ENCODE measurements at regions of chr20 and their contacts with region 1.

Region 1: DNA sequence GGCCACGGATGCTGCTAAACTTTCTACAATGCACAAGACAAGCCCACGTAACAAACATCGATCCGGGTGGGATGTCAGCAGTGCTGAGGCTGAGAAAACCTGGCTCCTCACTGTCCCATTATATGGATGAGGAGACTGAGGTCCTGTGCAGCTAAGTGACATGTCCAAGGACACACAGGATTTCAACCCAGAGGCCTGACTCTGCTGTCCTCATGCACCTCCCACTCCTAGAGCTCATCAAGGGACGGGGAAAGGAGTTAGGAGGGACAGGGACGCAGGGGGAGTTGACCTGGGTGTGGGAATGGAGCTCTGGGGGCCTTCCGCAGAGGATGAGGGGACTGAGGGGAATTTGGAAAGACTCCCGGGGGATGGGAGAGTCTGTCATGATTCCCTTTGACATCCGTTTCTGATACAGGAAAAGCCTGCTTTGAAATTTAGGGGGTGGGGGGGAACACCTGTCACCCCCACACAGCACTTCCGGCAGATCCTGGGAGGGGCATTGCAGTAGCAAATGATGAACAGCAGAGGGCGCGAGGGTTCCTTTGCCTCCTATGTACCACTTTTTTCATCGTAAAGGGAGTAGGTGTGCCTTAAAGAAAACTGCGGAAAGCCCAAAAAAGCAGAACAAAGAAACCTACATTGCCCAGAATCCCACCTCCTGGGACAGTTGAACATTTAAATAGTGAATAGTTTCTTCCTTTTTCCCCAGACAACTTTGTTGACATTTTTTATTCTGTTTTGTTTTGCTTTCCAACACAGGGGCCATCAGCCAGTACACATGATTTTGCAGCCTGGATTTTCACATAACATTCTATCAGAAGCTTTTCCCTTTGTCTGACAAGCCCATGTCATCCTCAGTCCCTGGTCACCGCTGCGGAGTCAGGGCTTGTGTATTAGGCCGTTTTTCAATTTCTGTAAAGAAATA is 48.6 kb downstream of the SLC2A10 start:
- DNase-seq: peak; percentile 48
- ATAC-seq: peak; percentile 84
- H3K4me3 ChIP-seq: no peak overlapping the region
- H3K27ac ChIP-seq: no peak overlapping the region
- H3K4me1 ChIP-seq: no peaks in the 10 kb centered on the region; a peak in 1 of 4 replicates
- H3K27me3 ChIP-seq: no peaks in the 10 kb centered on the region
- CTCF ChIP-seq: peak; percentile 61 to 95 (median 94); a peak in 5 of 6 replicates
- POLR2A ChIP-seq: no peak
- RAD21 ChIP-seq: peak; percentile 72

Region 2: GRCh38 chr20:46607191-46607848 is 150.7 kb before region 1 on chr20:
- CTCF ChIA-PET with region 1: no interaction called
- POLR2A ChIA-PET with region 1: no interaction called
- RAD21 ChIA-PET with region 1: no interaction called
- intact Hi-C with region 1: no loop called
- DNase-seq: no peak
- ATAC-seq: no peak
- H3K4me3 ChIP-seq: no peak overlapping the region
- H3K27ac ChIP-seq: no peak overlapping the region
- H3K4me1 ChIP-seq: no peaks in the 10 kb centered on the region
- H3K27me3 ChIP-seq: no peaks in the 10 kb centered on the region; the same call in 1 of the 2 replicates
- CTCF ChIP-seq: no peak
- POLR2A ChIP-seq: no peak
- RAD21 ChIP-seq: no peak

Region 3: GRCh38 chr20:47008842-47009508 is 251.0 kb after region 1 on chr20:
- CTCF ChIA-PET with region 1: no interaction called
- POLR2A ChIA-PET with region 1: no interaction called
- RAD21 ChIA-PET with region 1: no interaction called
- intact Hi-C with region 1: no loop called
- DNase-seq: no peak
- ATAC-seq: no peak
- H3K4me3 ChIP-seq: no peak overlapping the region
- H3K27ac ChIP-seq: no peak overlapping the region
- H3K4me1 ChIP-seq: no peaks in the 10 kb centered on the region
- H3K27me3 ChIP-seq: peaks cover 10% of the 10 kb centered on the region; the same call in 1 of the 2 replicates
- CTCF ChIP-seq: no peak
- POLR2A ChIP-seq: no peak
- RAD21 ChIP-seq: no peak

Region 4: GRCh38 chr20:47024461-47024937 is 266.5 kb after region 1 on chr20:
- CTCF ChIA-PET with region 1: no interaction called
- POLR2A ChIA-PET with region 1: no interaction called
- RAD21 ChIA-PET with region 1: no interaction called
- intact Hi-C with region 1: loop called (anchors 10 kb)
- DNase-seq: no peak
- ATAC-seq: no peak
- H3K4me3 ChIP-seq: no peak overlapping the region
- H3K27ac ChIP-seq: no peak overlapping the region
- H3K4me1 ChIP-seq: no peaks in the 10 kb centered on the region
- H3K27me3 ChIP-seq: peaks cover 34% of the 10 kb centered on the region
- CTCF ChIP-seq: no peak
- POLR2A ChIP-seq: no peak
- RAD21 ChIP-seq: no peak

Region 5: GRCh38 chr20:47150403-47151152 is 392.6 kb after region 1 on chr20:
- CTCF ChIA-PET with region 1: interaction called, 6 read pairs
- POLR2A ChIA-PET with region 1: no interaction called
- RAD21 ChIA-PET with region 1: interaction called in 1 of 2 experiments, 3 read pairs
- intact Hi-C with region 1: loop called (anchors 1 kb)
- DNase-seq: peak; percentile 75
- ATAC-seq: peak; percentile 100
- H3K4me3 ChIP-seq: no peak overlapping the region
- H3K27ac ChIP-seq: no peak overlapping the region
- H3K4me1 ChIP-seq: peaks cover 2 to 5% of the 10 kb centered on the region in 2 experiments; a peak in 2 of 4 replicates
- H3K27me3 ChIP-seq: no peaks in the 10 kb centered on the region
- CTCF ChIP-seq: peak; percentile 75 to 83 (median 80)
- POLR2A ChIP-seq: no peak
- RAD21 ChIP-seq: peak; percentile 88